Heart left ventricle (tissue), 16 donors: ENCODE measurements at regions of chr18 and their contacts with region 1.

Region 1: GRCh38 chr18:54444319-54444914 is 86.7 kb downstream of the C18orf54 start:
- DNase-seq: peak in 4 of 5 donors; percentile 13 to 53 (median 24)
- ATAC-seq: peak; percentile 46 to 70 (median 55)
- H3K4me3 ChIP-seq: no peak overlapping the region
- H3K27ac ChIP-seq: no peak overlapping the region
- H3K4me1 ChIP-seq: no peaks in the 10 kb centered on the region
- H3K27me3 ChIP-seq: peaks cover 0 to 8% (median 0%) of the 10 kb centered on the region in 9 donors
- CTCF ChIP-seq: peak; percentile 35 to 79 (median 62)
- POLR2A ChIP-seq: no peak

Region 2: GRCh38 chr18:53817976-53818950 is 626.2 kb before region 1 on chr18:
- intact Hi-C with region 1: loop called in 1 of 10 experiments (anchors 5 kb)
- DNase-seq: no peak
- ATAC-seq: no peak
- H3K4me3 ChIP-seq: no peak overlapping the region
- H3K27ac ChIP-seq: no peak overlapping the region
- H3K4me1 ChIP-seq: peaks cover 0 to 8% (median 0%) of the 10 kb centered on the region in 12 donors
- H3K27me3 ChIP-seq: no peaks in the 10 kb centered on the region
- CTCF ChIP-seq: no peak
- POLR2A ChIP-seq: no peak

Region 3: DNA sequence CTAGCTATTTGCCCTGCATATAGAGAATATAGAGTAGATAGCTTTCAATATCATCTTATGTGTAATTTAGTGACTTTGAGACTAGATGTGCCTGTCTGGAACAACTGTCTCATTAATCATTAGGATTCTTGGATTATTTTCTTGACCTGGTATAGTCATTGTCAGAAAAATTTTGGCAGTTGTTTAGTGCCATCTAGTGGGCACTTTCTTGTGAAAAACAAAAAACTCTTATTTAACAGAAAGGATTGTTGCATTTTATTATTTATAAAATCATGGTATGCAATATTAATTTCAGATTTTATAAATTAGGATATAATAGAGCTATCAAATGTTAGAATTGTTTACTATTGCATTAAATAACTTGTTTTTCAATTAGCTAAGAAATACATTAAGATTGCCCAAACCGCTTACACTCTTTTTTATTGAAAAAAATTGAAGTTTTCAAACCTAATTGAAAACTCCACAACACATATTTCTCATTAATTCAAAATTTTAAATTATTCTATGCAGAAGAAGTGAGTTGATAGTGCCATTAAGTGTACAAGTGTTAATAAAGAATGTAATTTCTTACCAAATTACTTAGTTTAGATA is 227.0 kb after region 1 on chr18:
- intact Hi-C with region 1: loop called in 9 of 10 experiments (anchors 2 to 10 kb)
- DNase-seq: no peak
- ATAC-seq: no peak
- H3K4me3 ChIP-seq: no peak overlapping the region
- H3K27ac ChIP-seq: no peak overlapping the region
- H3K4me1 ChIP-seq: no peaks in the 10 kb centered on the region
- H3K27me3 ChIP-seq: peaks cover 0 to 4% (median 0%) of the 10 kb centered on the region in 9 donors
- CTCF ChIP-seq: peak; percentile 35 to 74 (median 61)
- POLR2A ChIP-seq: no peak

Region 4: GRCh38 chr18:54679318-54680149 is 235.1 kb after region 1 on chr18:
- intact Hi-C with region 1: loop called in 7 of 10 experiments (anchors 5 to 10 kb)
- DNase-seq: no peak
- ATAC-seq: peak in 3 of 4 donors; percentile 44 to 60 (median 53)
- H3K4me3 ChIP-seq: no peak overlapping the region
- H3K27ac ChIP-seq: no peak overlapping the region
- H3K4me1 ChIP-seq: no peaks in the 10 kb centered on the region
- H3K27me3 ChIP-seq: no peaks in the 10 kb centered on the region
- CTCF ChIP-seq: peak; percentile 11 to 56 (median 38)
- POLR2A ChIP-seq: no peak

Region 5: GRCh38 chr18:54983041-54983686 is 538.7 kb after region 1 on chr18:
- intact Hi-C with region 1: loop called in 8 of 10 experiments (anchors 2 to 10 kb)
- DNase-seq: no peak
- ATAC-seq: peak in 3 of 4 donors; percentile 42 to 67 (median 49)
- H3K4me3 ChIP-seq: no peak overlapping the region
- H3K27ac ChIP-seq: no peak overlapping the region
- H3K4me1 ChIP-seq: no peaks in the 10 kb centered on the region
- H3K27me3 ChIP-seq: no peaks in the 10 kb centered on the region
- CTCF ChIP-seq: peak; percentile 60 to 80 (median 72)
- POLR2A ChIP-seq: no peak